Endothelial cell of umbilical vein (primary cell): ENCODE measurements at regions of chr3 and their contacts with region 1.

Region 1: GRCh38 chr3:114152519-114153151 is 26.2 kb downstream of the DRD3 start:
- DNase-seq: peak; percentile 83
- H3K4me3 ChIP-seq: peak overlapping the region in 2 of 3 experiments; percentile 9 to 31
- H3K27ac ChIP-seq: no peak overlapping the region
- H3K4me1 ChIP-seq: peaks cover 4% of the 10 kb centered on the region
- H3K27me3 ChIP-seq: no peaks in the 10 kb centered on the region
- CTCF ChIP-seq: peak; percentile 89 to 91
- POLR2A ChIP-seq: no peak

Region 2: GRCh38 chr3:113844622-113845222 is 307.9 kb before region 1 on chr3:
- CTCF ChIA-PET with region 1: interaction called, 113 read pairs
- POLR2A ChIA-PET with region 1: no interaction called
- dilution Hi-C with region 1: no loop called
- intact Hi-C with region 1: loop called (anchors 1 kb)
- DNase-seq: peak; percentile 63
- H3K4me3 ChIP-seq: no peak overlapping the region
- H3K27ac ChIP-seq: no peak overlapping the region
- H3K4me1 ChIP-seq: no peaks in the 10 kb centered on the region
- H3K27me3 ChIP-seq: no peaks in the 10 kb centered on the region
- CTCF ChIP-seq: peak; percentile 34 to 46
- POLR2A ChIP-seq: no peak

Region 3: DNA sequence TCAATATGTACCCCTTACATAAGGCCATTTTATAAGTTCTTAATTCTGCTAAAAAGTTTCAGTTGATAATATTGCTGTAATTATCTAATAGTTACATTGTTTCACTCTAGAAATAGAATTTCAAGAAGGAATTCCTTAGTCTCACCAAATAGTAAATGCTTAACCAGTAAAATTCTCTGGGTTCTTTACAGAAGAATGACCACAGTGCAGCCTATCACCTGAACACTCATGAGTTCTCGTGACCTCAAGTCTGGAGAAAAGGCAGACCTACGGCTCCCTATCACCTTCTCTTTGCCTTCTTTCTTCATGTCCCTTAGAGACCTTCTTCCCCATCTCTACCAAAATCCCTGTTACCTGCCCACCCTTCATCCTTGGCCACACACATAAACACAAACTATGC is 127.2 kb before region 1 on chr3:
- CTCF ChIA-PET with region 1: no interaction called
- POLR2A ChIA-PET with region 1: no interaction called
- dilution Hi-C with region 1: no loop called
- intact Hi-C with region 1: no loop called
- DNase-seq: no peak
- H3K4me3 ChIP-seq: no peak overlapping the region
- H3K27ac ChIP-seq: no peak overlapping the region
- H3K4me1 ChIP-seq: no peaks in the 10 kb centered on the region
- H3K27me3 ChIP-seq: no peaks in the 10 kb centered on the region
- CTCF ChIP-seq: no peak
- POLR2A ChIP-seq: no peak

Region 4: DNA sequence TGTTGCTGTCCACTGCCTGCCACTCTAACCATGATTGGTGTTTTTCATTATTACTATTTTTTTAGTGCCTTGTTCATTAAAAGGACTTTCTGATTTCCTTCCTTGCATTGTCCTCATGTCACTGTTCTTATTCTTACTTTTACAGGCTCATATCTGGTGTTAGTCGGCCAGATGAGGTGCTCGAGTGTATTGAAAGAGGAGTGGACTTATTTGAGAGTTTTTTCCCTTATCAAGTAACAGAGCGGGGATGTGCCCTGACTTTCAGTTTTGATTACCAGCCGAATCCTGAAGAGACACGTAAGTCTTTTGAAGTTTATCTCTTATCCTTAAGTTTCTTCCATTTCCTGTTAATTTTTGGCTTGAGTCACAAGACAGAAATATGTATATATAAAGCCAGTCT is 72.9 kb before region 1 on chr3:
- CTCF ChIA-PET with region 1: interaction called, 13 read pairs
- POLR2A ChIA-PET with region 1: no interaction called
- dilution Hi-C with region 1: no loop called
- intact Hi-C with region 1: no loop called
- DNase-seq: peak; percentile 88
- H3K4me3 ChIP-seq: peak overlapping the region in 2 of 3 experiments; percentile 29 to 55
- H3K27ac ChIP-seq: peak overlapping the region; percentile 63
- H3K4me1 ChIP-seq: peaks cover 22% of the 10 kb centered on the region
- H3K27me3 ChIP-seq: no peaks in the 10 kb centered on the region
- CTCF ChIP-seq: no peak
- POLR2A ChIP-seq: no peak

Region 5: DNA sequence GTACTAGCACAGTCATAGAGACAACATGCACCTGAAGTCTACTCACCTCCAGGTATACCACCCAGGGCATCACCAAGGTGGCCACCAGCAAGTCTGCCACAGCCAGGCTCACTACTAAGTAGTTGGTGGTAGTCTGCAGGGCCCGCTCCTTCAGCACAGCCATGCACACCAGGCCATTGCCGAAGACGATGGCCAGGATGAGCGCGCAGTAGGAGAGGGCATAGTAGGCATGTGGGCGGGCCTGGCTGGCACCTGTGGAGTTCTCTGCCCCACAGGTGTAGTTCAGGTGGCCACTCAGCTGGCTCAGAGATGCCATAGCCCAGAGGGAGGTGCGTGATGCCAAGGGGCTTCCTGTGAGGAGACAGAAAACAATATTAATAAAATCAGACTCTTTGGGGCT is 19.0 kb after region 1 on chr3:
- CTCF ChIA-PET with region 1: interaction called, 11 read pairs
- POLR2A ChIA-PET with region 1: no interaction called
- dilution Hi-C with region 1: no loop called
- intact Hi-C with region 1: no loop called
- DNase-seq: no peak
- H3K4me3 ChIP-seq: no peak overlapping the region
- H3K27ac ChIP-seq: no peak overlapping the region
- H3K4me1 ChIP-seq: no peaks in the 10 kb centered on the region
- H3K27me3 ChIP-seq: peaks cover 29 to 33% of the 10 kb centered on the region in 2 experiments
- CTCF ChIP-seq: no peak
- POLR2A ChIP-seq: no peak

Region 6: GRCh38 chr3:114260152-114260551 is 107.5 kb after region 1 on chr3:
- CTCF ChIA-PET with region 1: no interaction called
- POLR2A ChIA-PET with region 1: no interaction called
- dilution Hi-C with region 1: no loop called
- intact Hi-C with region 1: no loop called
- DNase-seq: no peak
- H3K4me3 ChIP-seq: no peak overlapping the region
- H3K27ac ChIP-seq: no peak overlapping the region
- H3K4me1 ChIP-seq: no peaks in the 10 kb centered on the region
- H3K27me3 ChIP-seq: no peaks in the 10 kb centered on the region
- CTCF ChIP-seq: no peak
- POLR2A ChIP-seq: no peak

Region 7: GRCh38 chr3:114299421-114299820 is 146.8 kb after region 1 on chr3:
- CTCF ChIA-PET with region 1: interaction called, 47 read pairs
- POLR2A ChIA-PET with region 1: no interaction called
- dilution Hi-C with region 1: no loop called
- intact Hi-C with region 1: loop called (anchors 1 kb)
- DNase-seq: peak; percentile 39
- H3K4me3 ChIP-seq: no peak overlapping the region
- H3K27ac ChIP-seq: no peak overlapping the region
- H3K4me1 ChIP-seq: no peaks in the 10 kb centered on the region
- H3K27me3 ChIP-seq: peaks cover 8% of the 10 kb centered on the region in 2 experiments
- CTCF ChIP-seq: peak; percentile 42 to 67
- POLR2A ChIP-seq: no peak

Region 8: DNA sequence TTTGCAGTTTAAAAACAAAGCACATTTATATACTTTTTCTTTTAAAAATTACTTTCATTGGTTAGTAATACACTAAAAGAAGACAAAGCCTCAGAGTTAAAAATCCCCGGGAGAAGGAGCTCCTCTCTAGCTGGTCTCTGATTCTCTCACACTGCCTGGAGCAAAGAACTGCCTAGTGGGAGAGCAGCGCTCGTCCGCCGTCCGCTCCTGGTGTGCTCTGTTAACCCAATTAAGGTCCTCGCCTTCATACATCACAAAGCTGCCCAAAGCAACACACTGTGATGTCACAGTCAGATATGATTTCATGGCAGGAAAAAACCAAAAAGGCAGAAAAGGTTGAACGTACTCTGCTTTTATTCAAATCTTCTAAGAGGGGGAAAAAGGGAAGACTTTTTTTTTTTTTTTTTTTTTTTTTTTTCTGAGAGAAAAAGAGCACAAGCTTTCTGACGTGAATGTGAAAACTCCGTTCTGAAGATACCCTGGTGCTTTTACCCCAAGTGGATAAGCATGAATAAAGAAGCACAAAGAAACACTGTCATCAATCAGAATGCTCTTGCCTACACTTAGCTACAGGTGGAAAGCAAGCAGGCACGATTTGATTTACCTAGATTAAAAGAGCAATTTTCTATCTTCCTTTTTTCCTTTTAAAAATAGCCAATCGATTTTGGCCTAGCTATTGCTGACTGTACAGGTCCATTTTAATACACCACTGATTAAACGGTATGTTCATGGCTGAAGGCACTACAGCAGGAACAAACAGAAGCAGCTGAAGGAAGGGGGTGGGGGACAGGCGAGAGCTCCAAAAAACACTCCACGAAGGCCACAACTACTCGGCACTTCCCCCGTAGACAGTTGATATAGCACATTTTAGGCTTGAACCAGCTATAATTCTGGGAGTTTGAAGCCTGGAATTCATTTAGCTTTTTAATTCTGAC is 256.4 kb after region 1 on chr3:
- CTCF ChIA-PET with region 1: no interaction called
- POLR2A ChIA-PET with region 1: no interaction called
- dilution Hi-C with region 1: no loop called
- intact Hi-C with region 1: no loop called
- DNase-seq: no peak
- H3K4me3 ChIP-seq: no peak overlapping the region
- H3K27ac ChIP-seq: no peak overlapping the region
- H3K4me1 ChIP-seq: peaks cover 9% of the 10 kb centered on the region
- H3K27me3 ChIP-seq: no peaks in the 10 kb centered on the region
- CTCF ChIP-seq: no peak
- POLR2A ChIP-seq: no peak

Region 9: GRCh38 chr3:114484919-114485318 is 332.3 kb after region 1 on chr3:
- CTCF ChIA-PET with region 1: no interaction called
- POLR2A ChIA-PET with region 1: no interaction called
- dilution Hi-C with region 1: no loop called
- intact Hi-C with region 1: no loop called
- DNase-seq: no peak
- H3K4me3 ChIP-seq: no peak overlapping the region
- H3K27ac ChIP-seq: no peak overlapping the region
- H3K4me1 ChIP-seq: no peaks in the 10 kb centered on the region
- H3K27me3 ChIP-seq: no peaks in the 10 kb centered on the region
- CTCF ChIP-seq: no peak
- POLR2A ChIP-seq: no peak